ENCODE measurements at regions of chr6 and their contacts with region 1.

Region 1: DNA sequence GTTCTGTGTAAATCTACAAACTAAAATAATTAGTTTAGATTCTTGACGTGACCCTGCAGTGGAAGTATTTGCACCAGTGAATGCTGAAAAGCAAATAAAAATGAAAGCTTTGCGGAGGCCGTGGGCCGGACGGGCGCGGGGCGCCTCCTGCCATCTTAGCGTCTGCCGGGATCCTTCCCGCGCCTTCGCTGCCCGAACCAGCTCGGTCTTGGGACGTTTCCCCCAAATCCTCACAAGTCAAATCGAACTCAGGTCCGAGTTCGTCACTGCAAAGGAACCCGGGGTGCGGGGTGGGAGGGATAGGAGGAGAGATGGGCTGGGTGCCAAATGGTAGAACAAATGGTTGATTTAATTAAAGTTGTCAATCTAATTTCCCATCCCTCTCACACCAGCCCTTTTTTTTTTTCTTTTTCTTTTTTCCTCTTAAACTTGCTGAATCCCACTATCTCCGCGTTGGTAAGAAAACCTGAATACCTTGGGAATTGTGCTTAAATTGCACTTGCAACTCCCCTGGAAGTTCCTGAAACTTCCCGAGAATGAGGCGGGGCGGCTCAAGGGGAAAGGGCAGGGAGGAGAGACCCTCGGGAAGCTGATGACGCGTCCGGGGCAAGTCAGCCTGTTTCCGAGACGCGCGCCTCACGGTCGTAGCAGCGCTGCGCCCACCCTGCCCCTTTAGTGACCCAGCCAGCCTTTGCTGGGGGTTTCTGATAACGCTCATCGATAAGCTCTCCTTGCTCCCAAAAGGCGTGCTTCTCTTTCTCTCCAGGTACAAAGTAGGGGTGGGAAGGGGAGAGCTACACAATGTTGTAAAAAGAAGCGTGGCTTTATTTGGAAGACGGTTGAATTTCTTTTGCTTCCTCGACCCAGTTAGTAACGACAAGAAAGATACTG is 1.8 kb downstream of the GJA1 start:
- DNase-seq: peak; percentile 56 to 67 (median 65)
- ATAC-seq: peak; percentile 61 to 80
- H3K4me3 ChIP-seq: peak overlapping the region; percentile 91
- H3K27ac ChIP-seq: peak overlapping the region; percentile 91
- H3K4me1 ChIP-seq: no peaks in the 10 kb centered on the region
- H3K27me3 ChIP-seq: no peaks in the 10 kb centered on the region

Region 2: GRCh38 chr6:121349601-121350000 is 87.6 kb before region 1 on chr6:
- intact Hi-C with region 1: no loop called
- DNase-seq: no peak
- ATAC-seq: no peak
- H3K4me3 ChIP-seq: no peak overlapping the region
- H3K27ac ChIP-seq: no peak overlapping the region
- H3K4me1 ChIP-seq: no peaks in the 10 kb centered on the region
- H3K27me3 ChIP-seq: no peaks in the 10 kb centered on the region

Region 3: GRCh38 chr6:121485359-121485811 is 48.2 kb after region 1 on chr6:
- intact Hi-C with region 1: no loop called
- DNase-seq: no peak
- ATAC-seq: no peak
- H3K4me3 ChIP-seq: no peak overlapping the region
- H3K27ac ChIP-seq: no peak overlapping the region
- H3K4me1 ChIP-seq: no peaks in the 10 kb centered on the region
- H3K27me3 ChIP-seq: no peaks in the 10 kb centered on the region

Region 4: DNA sequence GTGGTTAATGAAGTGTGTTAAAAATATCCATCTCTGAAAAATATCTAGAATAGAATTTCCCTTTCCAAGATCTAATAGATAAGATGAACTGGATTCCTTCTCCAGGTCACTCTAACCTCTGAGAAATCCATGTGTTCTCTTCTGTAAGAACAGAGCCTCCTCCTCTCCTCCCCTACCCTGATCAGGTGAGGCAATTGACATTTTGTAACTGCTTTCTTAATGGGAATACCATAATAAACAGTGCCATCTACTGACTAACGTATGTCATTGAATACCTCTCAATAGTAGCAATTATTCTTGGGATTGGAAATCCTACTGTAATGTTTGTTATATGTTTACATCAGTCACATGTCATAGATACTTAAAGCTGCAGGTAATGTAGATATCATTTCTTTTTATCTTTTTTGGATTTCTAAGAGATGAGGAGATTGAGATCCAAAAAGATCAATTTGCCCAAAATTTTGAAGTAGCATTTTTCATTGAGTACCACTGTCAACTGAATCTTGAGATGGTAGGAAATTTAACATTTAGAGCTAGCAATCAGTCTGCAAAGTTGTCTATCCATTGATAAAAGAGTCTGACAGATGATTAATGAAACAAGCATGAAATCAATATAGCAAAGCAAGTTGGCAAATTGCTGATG is 596.5 kb after region 1 on chr6:
- intact Hi-C with region 1: loop called (anchors 5 to 10 kb)
- DNase-seq: no peak
- ATAC-seq: peak; percentile 78 to 85
- H3K4me3 ChIP-seq: no peak overlapping the region
- H3K27ac ChIP-seq: no peak overlapping the region
- H3K4me1 ChIP-seq: no peaks in the 10 kb centered on the region
- H3K27me3 ChIP-seq: no peaks in the 10 kb centered on the region